Tibial artery (tissue), 4 donors: ENCODE measurements at regions of chr5 and their contacts with region 1.

Region 1: DNA sequence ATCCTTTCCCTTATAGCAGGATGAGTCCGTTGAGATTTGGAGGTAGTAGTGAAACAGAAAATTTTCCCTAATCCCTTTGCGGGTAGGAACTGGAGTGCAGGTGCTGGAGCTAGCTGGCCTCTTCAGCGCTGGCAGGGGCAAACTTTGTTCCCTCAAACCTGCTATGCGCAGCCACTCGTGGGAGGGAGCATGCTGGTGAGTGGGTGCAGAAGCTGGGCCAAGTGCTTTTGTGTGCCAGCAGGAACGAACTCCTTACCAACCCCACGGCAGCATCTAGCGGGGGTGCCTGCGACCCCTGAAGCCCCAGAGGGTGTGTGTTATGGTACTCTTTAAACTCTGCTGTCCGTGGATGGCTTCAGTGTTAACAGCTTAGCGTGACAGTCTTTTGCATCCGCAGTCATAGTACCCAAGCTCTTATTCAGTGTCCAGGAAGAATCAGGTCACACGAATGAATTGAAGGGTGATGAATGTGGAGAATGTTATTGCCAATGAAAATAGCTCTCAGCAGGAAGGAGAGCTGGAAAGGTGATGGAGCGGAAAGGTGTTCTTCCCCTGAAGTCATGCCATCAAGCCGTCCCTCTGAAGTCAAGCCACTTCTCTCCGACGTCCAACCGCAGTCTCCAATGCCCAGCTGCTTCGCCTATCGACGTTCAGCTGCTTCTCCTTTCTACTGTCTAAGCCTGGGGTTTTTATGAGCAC is 1445.1 kb upstream of the CDH9 start:
- DNase-seq: no peak
- H3K4me3 ChIP-seq: no peak overlapping the region
- H3K27ac ChIP-seq: no peak overlapping the region
- H3K4me1 ChIP-seq: no peaks in the 10 kb centered on the region
- H3K27me3 ChIP-seq: no peaks in the 10 kb centered on the region
- CTCF ChIP-seq: no peak

Region 2: DNA sequence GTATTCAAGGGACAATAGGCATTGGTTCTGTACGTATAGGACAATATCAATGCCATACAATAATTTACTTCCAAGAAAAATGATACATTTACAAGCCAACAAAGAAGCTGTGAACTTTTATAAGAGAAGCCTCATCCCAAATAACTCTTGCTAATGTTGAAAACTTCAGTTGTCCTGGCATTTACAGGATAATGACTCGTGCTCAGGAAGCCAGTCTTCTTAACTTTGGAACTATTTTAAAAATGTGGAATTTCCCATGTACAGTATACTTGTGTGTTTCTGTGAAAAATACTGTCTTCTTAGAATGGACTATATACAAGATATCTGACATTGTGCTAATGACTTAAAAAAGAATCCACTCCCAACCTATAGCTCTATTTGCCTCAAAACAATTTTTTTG is 34.2 kb after region 1 on chr5:
- intact Hi-C with region 1: no loop called
- DNase-seq: no peak
- H3K4me3 ChIP-seq: no peak overlapping the region
- H3K27ac ChIP-seq: no peak overlapping the region
- H3K4me1 ChIP-seq: peaks cover 0 to 9% (median 0%) of the 10 kb centered on the region in 4 donors
- H3K27me3 ChIP-seq: no peaks in the 10 kb centered on the region
- CTCF ChIP-seq: no peak

Region 3: DNA sequence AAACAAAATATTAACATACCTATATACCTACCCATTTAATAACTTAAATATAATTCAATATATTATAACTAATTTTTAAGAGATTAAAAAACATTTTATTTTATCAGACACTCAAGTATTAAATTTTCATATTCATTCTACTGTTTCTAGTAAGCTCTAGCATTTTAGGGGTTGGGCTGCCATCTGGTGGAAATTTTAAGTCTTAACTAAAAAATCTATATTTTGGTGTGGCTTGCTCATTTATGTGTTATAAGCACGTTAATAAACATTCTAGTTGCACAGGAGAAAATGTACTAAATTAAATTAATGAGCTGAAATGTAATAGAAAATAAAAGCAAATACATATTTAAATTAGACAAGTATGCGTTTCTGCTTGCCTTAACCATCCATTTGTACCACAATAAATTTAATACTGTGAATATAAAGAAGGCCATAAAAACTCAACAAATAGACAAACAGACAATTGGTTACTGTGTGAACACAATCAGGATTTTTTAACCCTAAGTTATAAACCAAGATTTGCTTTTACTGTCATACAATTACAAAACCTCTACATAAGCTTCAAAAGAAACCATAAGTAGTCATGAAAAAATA is 283.2 kb after region 1 on chr5:
- intact Hi-C with region 1: loop called (anchors 5 kb)
- DNase-seq: no peak
- H3K4me3 ChIP-seq: no peak overlapping the region
- H3K27ac ChIP-seq: no peak overlapping the region
- H3K4me1 ChIP-seq: peaks cover 0 to 15% (median 0%) of the 10 kb centered on the region in 4 donors
- H3K27me3 ChIP-seq: no peaks in the 10 kb centered on the region
- CTCF ChIP-seq: peak; percentile 46 to 56

Region 4: GRCh38 chr5:28903643-28904042 is 420.2 kb after region 1 on chr5:
- intact Hi-C with region 1: no loop called
- DNase-seq: no peak
- H3K4me3 ChIP-seq: no peak overlapping the region
- H3K27ac ChIP-seq: no peak overlapping the region
- H3K4me1 ChIP-seq: no peaks in the 10 kb centered on the region
- H3K27me3 ChIP-seq: no peaks in the 10 kb centered on the region
- CTCF ChIP-seq: no peak